ENCODE measurements at regions of chr5 and their contacts with region 1.

Region 1: DNA sequence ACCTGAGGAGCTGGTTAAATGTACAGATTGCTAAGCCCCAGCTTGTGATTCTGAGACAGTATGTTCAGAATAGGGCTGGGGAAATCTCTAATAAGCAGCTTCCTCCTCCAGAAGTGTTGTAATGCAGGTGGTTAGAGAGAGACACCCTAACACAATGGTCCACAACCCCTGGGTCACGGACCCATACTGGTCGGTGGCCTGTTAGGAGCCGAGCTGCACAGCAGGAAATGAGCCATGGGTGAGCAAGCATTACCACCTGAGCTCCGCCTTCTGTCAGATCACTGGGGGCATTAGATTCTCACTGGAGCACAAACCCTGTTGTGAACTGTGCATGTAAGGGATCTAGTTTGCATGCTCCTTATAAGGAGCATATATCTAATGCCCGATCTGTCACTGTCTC is 61.8 kb downstream of the SLC36A1 start:
- DNase-seq: no peak
- ATAC-seq: no peak
- H3K4me3 ChIP-seq: no peak overlapping the region
- H3K27ac ChIP-seq: no peak overlapping the region
- H3K4me1 ChIP-seq: no peaks in the 10 kb centered on the region
- H3K27me3 ChIP-seq: no peaks in the 10 kb centered on the region
- CTCF ChIP-seq: no peak

Region 2: GRCh38 chr5:151315998-151316597 is 193.1 kb before region 1 on chr5:
- CTCF ChIA-PET with region 1: no interaction called
- POLR2A ChIA-PET with region 1: no interaction called
- in situ Hi-C with region 1: no loop called
- intact Hi-C with region 1: loop called (anchors 10 kb)
- DNase-seq: peak; percentile 58
- ATAC-seq: peak; percentile 90
- H3K4me3 ChIP-seq: no peak overlapping the region
- H3K27ac ChIP-seq: no peak overlapping the region
- H3K4me1 ChIP-seq: no peaks in the 10 kb centered on the region
- H3K27me3 ChIP-seq: peaks cover 2% of the 10 kb centered on the region; the same call in 1 of the 2 replicates
- CTCF ChIP-seq: peak; percentile 94

Region 3: DNA sequence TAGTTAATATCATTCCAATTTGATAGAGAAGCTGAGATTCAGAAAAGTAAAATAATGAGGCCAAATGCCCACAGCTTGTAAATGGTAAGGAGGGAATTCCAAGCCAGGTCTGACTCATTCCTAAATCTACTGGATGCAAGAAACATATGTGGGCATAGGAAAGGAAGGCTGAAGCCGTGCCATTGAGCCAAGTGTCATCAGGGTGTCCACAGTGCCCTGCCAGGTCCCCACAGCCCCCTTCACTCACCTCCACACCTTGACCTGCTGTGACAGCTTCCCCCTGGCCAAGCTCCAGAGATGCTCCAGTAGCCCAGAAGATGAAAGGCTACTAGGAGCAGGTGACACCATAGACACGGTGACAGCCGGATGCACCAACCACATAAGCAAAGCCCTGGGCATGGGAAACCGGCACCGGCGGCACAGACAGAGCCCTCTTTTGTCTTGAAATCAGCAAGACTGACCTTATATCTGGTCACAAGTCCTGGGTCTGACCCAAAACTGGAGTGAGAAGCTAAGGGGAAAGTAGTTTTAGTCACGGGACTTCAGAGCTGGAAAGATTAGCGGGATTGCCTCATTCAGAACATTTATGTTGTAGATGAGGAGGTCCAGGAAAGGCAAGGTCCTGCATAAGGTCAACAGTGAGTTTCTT is 102.0 kb after region 1 on chr5:
- CTCF ChIA-PET with region 1: interaction called, 13 read pairs
- POLR2A ChIA-PET with region 1: no interaction called
- in situ Hi-C with region 1: no loop called
- intact Hi-C with region 1: no loop called
- DNase-seq: no peak
- ATAC-seq: no peak
- H3K4me3 ChIP-seq: no peak overlapping the region
- H3K27ac ChIP-seq: no peak overlapping the region
- H3K4me1 ChIP-seq: no peaks in the 10 kb centered on the region
- H3K27me3 ChIP-seq: no peaks in the 10 kb centered on the region
- CTCF ChIP-seq: no peak